Activated B cell treated with CpG ODN at 0.5 μM for 24 hours (primary cell): ENCODE measurements at regions of chr2 and their contacts with region 1.

Region 1: DNA sequence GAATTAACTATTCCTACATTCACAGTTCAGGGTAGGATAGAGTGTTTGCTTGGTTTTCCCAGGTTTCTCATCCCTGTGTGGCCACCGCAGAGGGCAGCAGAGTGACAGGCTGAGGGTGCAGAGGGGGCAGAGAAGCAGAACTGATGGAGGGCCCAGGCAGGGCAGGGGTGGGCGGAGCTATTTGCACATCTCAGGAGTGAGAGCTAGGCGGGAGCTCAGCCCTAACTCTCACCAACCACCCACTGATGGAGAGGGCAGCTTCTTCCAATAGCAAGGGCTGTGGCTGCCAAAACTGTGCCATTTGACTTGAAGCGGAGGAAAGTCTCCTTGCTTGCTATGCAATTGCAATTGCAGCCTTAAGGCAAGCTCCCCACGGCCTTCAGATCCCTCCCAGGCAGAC is 12.0 kb upstream of the DARS1 start:
- DNase-seq: peak; percentile 41
- ATAC-seq: peak; percentile 97
- H3K4me3 Mint-ChIP-seq: peak overlapping the region; percentile 24
- H3K27ac Mint-ChIP-seq: peak overlapping the region; percentile 86
- H3K4me1 Mint-ChIP-seq: peaks cover 51% of the 10 kb centered on the region
- H3K27me3 Mint-ChIP-seq: no peaks in the 10 kb centered on the region
- CTCF ChIP-seq: no peak

Region 2: GRCh38 chr2:136008205-136008865 is 11.0 kb after region 1 on chr2:
- CTCF ChIA-PET with region 1: interaction called, 5 read pairs
- POLR2A ChIA-PET with region 1: interaction called, 15 read pairs
- intact Hi-C with region 1: loop called (anchors 1 kb)
- DNase-seq: peak; percentile 46
- ATAC-seq: peak; percentile 93
- H3K4me3 Mint-ChIP-seq: peak overlapping the region; percentile 52
- H3K27ac Mint-ChIP-seq: peak overlapping the region; percentile 90
- H3K4me1 Mint-ChIP-seq: peaks cover 66% of the 10 kb centered on the region
- H3K27me3 Mint-ChIP-seq: no peaks in the 10 kb centered on the region
- CTCF ChIP-seq: no peak

Region 3: DNA sequence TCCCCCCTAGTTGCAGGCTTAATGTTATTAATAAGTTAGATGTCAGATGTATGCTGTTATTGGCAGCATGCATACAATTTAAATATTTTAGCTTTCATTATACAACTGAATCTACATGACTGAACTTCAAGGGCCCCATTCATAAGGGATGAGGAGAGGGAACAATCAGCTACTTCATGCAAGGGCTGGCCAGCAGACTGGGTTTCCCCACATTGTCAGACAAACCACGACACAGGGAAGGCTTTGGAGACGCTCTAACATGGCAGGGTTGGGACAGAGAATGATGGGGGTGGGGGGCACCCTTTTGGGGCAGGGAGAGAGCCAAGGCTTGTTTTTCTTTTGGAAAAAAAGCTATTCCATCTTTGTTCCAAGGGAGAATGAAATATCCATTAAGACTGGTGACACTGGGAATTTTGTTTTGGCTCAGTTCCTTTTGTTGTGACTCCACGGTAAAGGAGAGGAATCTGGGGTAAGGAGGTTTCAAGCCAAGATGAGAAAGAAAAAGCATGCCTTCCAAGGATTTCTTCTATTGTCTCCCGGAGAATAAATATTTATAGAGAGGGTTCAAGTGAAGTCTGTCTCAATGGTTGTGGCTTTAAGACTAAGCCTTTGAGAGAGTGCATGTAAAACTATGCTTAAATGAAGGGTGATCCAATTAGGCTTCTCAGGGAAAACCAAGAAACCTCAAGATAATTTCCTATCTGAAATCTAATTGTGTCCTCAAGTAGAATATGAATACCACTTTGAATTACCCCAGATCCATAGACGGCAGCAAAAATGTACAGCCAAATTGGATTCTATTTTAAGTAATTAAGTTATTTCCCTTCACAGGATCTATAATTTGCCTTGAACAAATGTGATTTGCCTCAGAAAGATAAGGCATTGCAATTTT is 115.2 kb after region 1 on chr2:
- CTCF ChIA-PET with region 1: interaction called, 8 read pairs
- POLR2A ChIA-PET with region 1: interaction called, 83 read pairs
- intact Hi-C with region 1: no loop called
- DNase-seq: no peak
- ATAC-seq: no peak
- H3K4me3 Mint-ChIP-seq: peak overlapping the region; percentile 96
- H3K27ac Mint-ChIP-seq: peak overlapping the region; percentile 24
- H3K4me1 Mint-ChIP-seq: peaks cover 83% of the 10 kb centered on the region
- H3K27me3 Mint-ChIP-seq: no peaks in the 10 kb centered on the region
- CTCF ChIP-seq: no peak

Region 4: DNA sequence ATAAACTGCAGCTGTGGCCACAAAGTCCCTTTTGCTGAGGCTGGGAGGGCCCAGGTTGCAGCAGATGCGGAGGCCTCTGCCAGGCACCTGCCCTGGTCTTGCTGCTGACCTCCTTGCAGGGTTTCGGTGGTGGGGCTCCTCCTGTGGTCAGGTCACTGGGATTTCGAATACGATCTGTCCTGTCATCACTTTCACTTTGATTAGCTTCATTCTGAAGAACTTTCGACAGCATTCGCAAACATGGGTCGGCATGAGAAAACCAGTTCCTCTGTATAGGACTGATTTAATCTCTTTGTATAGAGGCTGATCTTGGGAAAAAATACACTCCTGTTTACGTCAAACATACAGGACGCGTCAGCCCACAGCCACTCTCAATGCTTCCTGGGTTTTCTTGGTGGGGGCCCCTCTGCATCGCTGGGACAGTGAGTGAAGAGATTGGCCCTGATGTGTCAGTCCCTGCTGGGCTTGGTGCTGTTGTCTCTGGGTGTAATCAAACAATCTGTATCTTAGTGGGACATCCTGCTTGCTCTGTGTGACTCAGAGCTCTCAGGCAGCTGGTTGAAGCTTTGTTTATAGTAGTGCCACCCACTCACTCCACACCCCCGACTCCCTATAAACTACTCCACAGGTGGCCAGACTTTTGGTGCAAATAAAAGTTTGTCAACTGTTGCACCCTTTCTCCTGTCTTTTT is 329.9 kb after region 1 on chr2:
- CTCF ChIA-PET with region 1: no interaction called
- POLR2A ChIA-PET with region 1: no interaction called
- intact Hi-C with region 1: loop called (anchors 5 kb)
- DNase-seq: no peak
- ATAC-seq: peak; percentile 78
- H3K4me3 Mint-ChIP-seq: peak overlapping the region; percentile 60
- H3K27ac Mint-ChIP-seq: peak overlapping the region; percentile 85
- H3K4me1 Mint-ChIP-seq: peaks cover 56% of the 10 kb centered on the region
- H3K27me3 Mint-ChIP-seq: no peaks in the 10 kb centered on the region
- CTCF ChIP-seq: no peak